ENCODE measurements at regions of chr6 and their contacts with region 1.

Region 1: GRCh38 chr6:14066782-14067406 is 50.7 kb upstream of the CD83 start:
- DNase-seq: peak; percentile 55 to 77
- H3K4me3 ChIP-seq: no peak overlapping the region
- H3K4me1 ChIP-seq: peaks cover 2% of the 10 kb centered on the region; the same call in 1 of the 2 replicates
- H3K27me3 ChIP-seq: no peaks in the 10 kb centered on the region

Region 2: GRCh38 chr6:13914351-13914750 is 152.5 kb before region 1 on chr6:
- in situ Hi-C with region 1: loop called (anchors 5 kb)
- DNase-seq: no peak
- H3K4me3 ChIP-seq: no peak overlapping the region
- H3K4me1 ChIP-seq: no peaks in the 10 kb centered on the region
- H3K27me3 ChIP-seq: no peaks in the 10 kb centered on the region

Measured in HAP-1 (cell line).